Lower lobe of right lung (tissue), 2 donors: ENCODE measurements at regions of chr10 and their contacts with region 1.

Region 1: DNA sequence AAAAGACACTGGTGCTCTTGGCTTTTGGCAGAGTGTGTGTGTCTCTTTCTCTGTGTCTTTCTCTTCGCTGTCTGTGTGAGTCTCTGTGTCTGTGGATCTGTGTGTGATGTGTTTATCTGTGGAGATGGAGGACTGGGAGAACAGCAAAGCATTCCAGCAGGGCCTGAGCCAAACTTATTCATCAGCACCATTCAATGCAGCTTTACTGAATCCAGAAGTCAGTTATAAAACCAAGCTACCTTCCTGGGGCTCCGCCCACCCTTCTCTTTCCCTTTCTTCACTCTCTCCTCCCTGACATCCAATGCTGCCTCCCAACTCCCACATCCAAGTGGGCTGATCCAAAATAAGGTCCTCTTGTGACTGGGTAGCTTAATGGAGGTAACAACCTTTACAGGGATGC is 3.9 kb downstream of the SGMS1 start:
- DNase-seq: no peak
- ATAC-seq: no peak
- H3K4me3 ChIP-seq: no peak overlapping the region
- H3K27ac ChIP-seq: no peak overlapping the region
- H3K4me1 ChIP-seq: peaks cover 11% of the 10 kb centered on the region
- H3K27me3 ChIP-seq: no peaks in the 10 kb centered on the region
- CTCF ChIP-seq: no peak

Region 2: DNA sequence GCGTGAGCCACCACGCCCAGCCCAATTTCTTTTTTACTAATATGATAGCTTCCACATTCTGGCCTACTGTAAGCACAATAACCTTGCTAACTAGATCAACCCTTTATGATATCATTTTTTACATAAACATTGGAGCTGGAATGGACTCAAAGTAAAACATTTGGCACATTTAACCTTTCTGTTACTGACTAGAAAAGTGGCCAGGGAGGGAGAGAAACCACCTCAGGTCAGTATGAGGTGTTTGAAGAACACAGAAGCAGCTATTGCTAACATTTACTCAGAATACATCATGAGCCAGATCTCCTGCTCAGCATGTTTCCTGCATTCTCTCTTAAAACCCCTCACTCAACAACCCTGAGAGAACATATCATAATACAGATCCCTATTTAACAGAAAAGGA is 23.4 kb before region 1 on chr10:
- intact Hi-C with region 1: loop called (anchors 2 kb)
- DNase-seq: no peak
- ATAC-seq: no peak
- H3K4me3 ChIP-seq: no peak overlapping the region
- H3K27ac ChIP-seq: no peak overlapping the region
- H3K4me1 ChIP-seq: peaks cover 23% of the 10 kb centered on the region
- H3K27me3 ChIP-seq: no peaks in the 10 kb centered on the region
- CTCF ChIP-seq: no peak

Region 3: GRCh38 chr10:50885097-50885859 is 265.4 kb after region 1 on chr10 and contains the start of gene A1CF:
- intact Hi-C with region 1: no loop called
- DNase-seq: no peak
- ATAC-seq: no peak
- H3K4me3 ChIP-seq: no peak within 1 kb of the TSS
- H3K27ac ChIP-seq: no peak within 1 kb of the TSS
- H3K4me1 ChIP-seq: no peaks in the 10 kb centered on the region
- H3K27me3 ChIP-seq: no peaks in the 10 kb centered on the region
- CTCF ChIP-seq: no peak
- total RNA-seq, gene A1CF: not detected